T-cell (primary cell): ENCODE measurements at regions of chr6 and their contacts with region 1.

Region 1: DNA sequence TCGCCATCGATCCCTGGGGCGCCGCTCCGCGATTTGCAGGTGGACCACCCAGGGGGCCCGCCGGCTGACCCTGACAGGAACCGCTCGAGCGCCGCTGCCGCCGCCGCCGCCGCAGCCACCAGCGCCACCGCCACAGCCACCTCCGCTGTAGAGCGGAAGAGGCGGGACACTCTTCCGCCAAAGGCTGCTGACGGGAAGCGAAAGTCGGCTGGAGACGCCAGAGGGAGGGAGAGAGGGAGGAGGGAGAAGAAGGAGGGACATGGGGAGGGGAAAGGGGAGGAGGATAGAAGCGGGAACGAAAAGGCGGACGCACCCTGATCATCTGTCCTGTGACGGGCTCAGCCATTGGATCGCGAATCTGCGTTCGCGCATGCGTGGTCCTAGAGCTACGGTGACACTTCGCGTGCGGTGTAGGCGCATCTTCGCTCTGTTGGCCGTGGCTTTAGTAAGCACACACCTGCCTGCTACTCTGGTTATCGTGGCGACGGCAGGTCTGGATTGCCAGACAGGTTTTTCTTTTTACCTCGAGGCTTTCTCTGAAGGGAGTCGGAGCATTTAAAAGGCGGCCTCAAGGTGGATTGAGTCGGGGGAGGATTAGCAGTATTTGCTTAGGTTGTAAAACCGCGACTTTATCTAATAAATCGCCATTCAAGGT is at the start of gene TMEM30A:
- DNase-seq: peak; percentile 81 to 99 (median 93)
- ATAC-seq: peak; percentile 93 to 97 (median 96)
- H3K4me3 ChIP-seq: peak within 1 kb of the TSS; percentile 74 to 91
- H3K4me3 Mint-ChIP-seq: no peak within 1 kb of the TSS
- H3K27ac ChIP-seq: peak within 1 kb of the TSS; percentile 79
- H3K27ac Mint-ChIP-seq: no peak within 1 kb of the TSS
- H3K4me1 ChIP-seq: peaks cover 8 to 20% of the 10 kb centered on the region in 2 experiments
- H3K4me1 Mint-ChIP-seq: peaks cover 28 to 51% (median 31%) of the 10 kb centered on the region in 3 donors
- H3K27me3 ChIP-seq: no peaks in the 10 kb centered on the region
- H3K27me3 Mint-ChIP-seq: no peaks in the 10 kb centered on the region
- total RNA-seq, gene TMEM30A: 43.4 to 67.6 (median 55.1) TPM

Region 2: DNA sequence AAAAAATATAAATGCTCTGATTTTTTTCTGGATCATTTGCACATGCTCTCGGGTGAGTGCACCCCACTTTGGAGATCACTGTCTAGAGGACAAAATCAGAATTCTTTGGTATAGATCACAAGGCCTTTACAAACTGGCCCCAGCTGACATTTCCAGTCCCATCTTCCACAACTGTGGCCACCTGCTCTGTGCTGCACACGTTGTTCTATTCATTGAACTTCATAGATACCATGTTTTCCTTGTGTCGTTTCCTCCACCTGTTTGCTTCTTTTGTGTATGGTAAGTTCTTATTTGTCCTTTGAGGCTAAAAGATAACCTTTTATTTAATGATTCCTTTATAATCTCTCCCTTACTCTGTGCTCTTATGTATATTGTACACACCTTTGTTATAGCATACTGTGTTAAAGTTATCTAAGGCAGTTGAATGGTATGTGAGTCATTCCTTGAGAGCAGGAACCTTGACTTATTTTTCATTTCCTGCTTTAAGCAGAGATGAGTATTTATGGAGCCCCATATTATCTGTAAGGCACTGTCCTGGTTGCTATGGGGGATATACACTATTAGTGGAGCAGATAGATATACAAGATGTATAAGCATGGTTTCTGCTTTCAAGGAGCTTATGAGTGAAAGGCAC is 1619.0 kb before region 1 on chr6:
- CTCF ChIA-PET with region 1: no interaction called
- POLR2A ChIA-PET with region 1: interaction called in 1 of 2 experiments, 17 read pairs
- DNase-seq: no peak
- ATAC-seq: no peak
- H3K4me3 ChIP-seq: no peak overlapping the region
- H3K4me3 Mint-ChIP-seq: no peak overlapping the region
- H3K27ac ChIP-seq: no peak overlapping the region
- H3K27ac Mint-ChIP-seq: no peak overlapping the region
- H3K4me1 ChIP-seq: no peaks in the 10 kb centered on the region
- H3K4me1 Mint-ChIP-seq: no peaks in the 10 kb centered on the region
- H3K27me3 ChIP-seq: no peaks in the 10 kb centered on the region
- H3K27me3 Mint-ChIP-seq: peaks cover 24 to 27% of the 10 kb centered on the region in 2 donors

Region 3: DNA sequence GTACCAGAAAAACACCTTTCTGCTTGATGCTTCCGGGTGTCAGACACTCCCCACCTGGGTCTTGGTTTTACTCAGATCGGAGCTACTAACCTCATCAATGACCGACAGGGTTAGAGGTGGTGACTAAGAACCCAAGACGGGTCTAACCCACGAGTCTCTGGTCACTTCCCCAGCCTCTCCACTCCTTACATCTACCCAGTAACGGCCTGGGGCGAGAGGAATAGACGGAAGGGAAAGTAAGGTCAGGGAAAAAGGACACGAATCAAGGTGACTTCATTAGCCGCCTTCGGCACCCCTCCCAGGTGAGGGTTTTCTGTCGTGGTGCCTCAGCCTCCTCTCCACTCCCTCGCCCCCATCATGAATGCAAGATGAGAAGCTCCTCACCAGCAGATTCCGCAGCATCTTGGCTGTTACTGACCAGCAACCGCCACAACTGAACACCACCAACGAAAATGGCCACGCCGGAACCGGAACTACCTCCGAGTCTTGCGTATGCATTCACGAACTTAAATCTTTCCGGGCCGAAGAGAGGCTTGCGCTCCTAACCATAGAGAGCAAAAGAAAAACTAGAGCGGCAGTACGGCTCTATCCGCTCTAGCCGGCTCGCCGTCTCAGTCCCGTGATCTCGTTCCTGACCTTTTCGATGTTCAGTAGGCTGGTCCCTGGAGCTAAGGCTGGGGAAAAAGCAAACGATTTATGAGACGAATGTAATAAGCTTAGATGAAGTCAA is 41.3 kb before region 1 on chr6 and contains the start of gene COX7A2:
- CTCF ChIA-PET with region 1: interaction called in 1 of 2 experiments, 6 read pairs
- POLR2A ChIA-PET with region 1: interaction called, 10 to 11 read pairs
- DNase-seq: peak; percentile 62 to 92 (median 83)
- ATAC-seq: peak; percentile 96 to 98 (median 98)
- H3K4me3 ChIP-seq: peak within 1 kb of the TSS; percentile 88 to 98
- H3K4me3 Mint-ChIP-seq: peak within 1 kb of the TSS; percentile 94 to 100 (median 97)
- H3K27ac ChIP-seq: peak within 1 kb of the TSS; percentile 97
- H3K27ac Mint-ChIP-seq: peak within 1 kb of the TSS; percentile 98
- H3K4me1 ChIP-seq: peaks cover 0 to 19% of the 10 kb centered on the region in 2 experiments
- H3K4me1 Mint-ChIP-seq: peaks cover 31 to 40% (median 34%) of the 10 kb centered on the region in 3 donors
- H3K27me3 ChIP-seq: peaks cover 0 to 5% of the 10 kb centered on the region in 2 experiments
- H3K27me3 Mint-ChIP-seq: peaks cover 7 to 13% of the 10 kb centered on the region in 2 donors
- total RNA-seq, gene COX7A2: 195 to 213 (median 198) TPM

Region 4: GRCh38 chr6:75296811-75297779 is 12.3 kb after region 1 on chr6:
- CTCF ChIA-PET with region 1: interaction called, 4 to 11 read pairs
- POLR2A ChIA-PET with region 1: no interaction called
- DNase-seq: peak in 1 of 35 experiments; percentile 79
- ATAC-seq: peak; percentile 41 to 60 (median 43)
- H3K4me3 ChIP-seq: no peak overlapping the region
- H3K4me3 Mint-ChIP-seq: no peak overlapping the region
- H3K27ac ChIP-seq: no peak overlapping the region
- H3K27ac Mint-ChIP-seq: no peak overlapping the region
- H3K4me1 ChIP-seq: no peaks in the 10 kb centered on the region
- H3K4me1 Mint-ChIP-seq: no peaks in the 10 kb centered on the region
- H3K27me3 ChIP-seq: no peaks in the 10 kb centered on the region
- H3K27me3 Mint-ChIP-seq: no peaks in the 10 kb centered on the region

Region 5: DNA sequence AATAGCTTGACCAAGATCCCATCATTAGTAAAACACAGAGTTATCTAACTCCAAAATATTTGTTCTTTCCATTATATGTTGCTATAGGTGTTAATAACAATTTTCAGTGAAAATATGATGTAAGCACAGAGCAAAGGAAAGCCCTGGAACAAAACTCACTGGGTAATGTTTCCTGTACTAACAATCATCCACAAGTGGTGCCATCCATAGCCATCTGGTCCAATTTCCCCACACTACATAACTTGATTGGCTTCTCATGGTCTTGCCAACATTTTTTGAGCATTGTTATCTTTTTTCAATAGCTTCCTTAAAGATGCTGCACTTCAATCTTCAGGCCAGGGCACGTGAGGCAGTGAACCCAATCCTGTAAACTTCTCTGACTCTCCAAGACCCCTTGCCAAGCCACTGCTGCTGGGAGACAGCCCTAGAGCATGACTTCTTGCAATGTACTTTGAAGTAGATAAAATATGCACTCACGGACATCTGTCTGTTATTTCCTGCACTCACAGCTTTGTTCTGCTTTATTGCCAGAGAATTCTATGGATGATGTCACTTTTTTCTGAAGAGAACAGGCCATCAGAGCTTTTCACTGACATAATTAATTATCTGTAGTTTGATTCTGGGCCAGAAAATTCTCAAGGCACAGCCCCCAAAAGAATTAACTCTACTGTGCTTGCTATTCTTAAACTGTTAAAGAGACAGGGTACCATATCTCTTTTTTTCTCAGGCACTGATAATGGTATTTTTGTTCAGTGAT is 97.3 kb after region 1 on chr6:
- CTCF ChIA-PET with region 1: no interaction called
- POLR2A ChIA-PET with region 1: no interaction called
- DNase-seq: no peak
- ATAC-seq: no peak
- H3K4me3 ChIP-seq: no peak overlapping the region
- H3K4me3 Mint-ChIP-seq: no peak overlapping the region
- H3K27ac ChIP-seq: no peak overlapping the region
- H3K27ac Mint-ChIP-seq: no peak overlapping the region
- H3K4me1 ChIP-seq: no peaks in the 10 kb centered on the region
- H3K4me1 Mint-ChIP-seq: no peaks in the 10 kb centered on the region
- H3K27me3 ChIP-seq: no peaks in the 10 kb centered on the region
- H3K27me3 Mint-ChIP-seq: peaks cover 0 to 10% of the 10 kb centered on the region in 2 donors